AG04450 (cell line): ENCODE measurements at regions of chr10 and their contacts with region 1.

Region 1: GRCh38 chr10:26890956-26891355 is 30.2 kb upstream of the ABI1 start:
- DNase-seq: peak; percentile 29
- H3K4me3 ChIP-seq: no peak overlapping the region
- H3K27ac ChIP-seq: no peak overlapping the region
- H3K27me3 ChIP-seq: peaks cover 2% of the 10 kb centered on the region
- CTCF ChIP-seq: peak; percentile 67

Region 2: GRCh38 chr10:26909746-26910145 is 18.8 kb after region 1 on chr10:
- CTCF ChIA-PET with region 1: no interaction called
- POLR2A ChIA-PET with region 1: no interaction called
- DNase-seq: no peak
- H3K4me3 ChIP-seq: no peak overlapping the region
- H3K27ac ChIP-seq: no peak overlapping the region
- H3K27me3 ChIP-seq: no peaks in the 10 kb centered on the region
- CTCF ChIP-seq: no peak

Region 3: DNA sequence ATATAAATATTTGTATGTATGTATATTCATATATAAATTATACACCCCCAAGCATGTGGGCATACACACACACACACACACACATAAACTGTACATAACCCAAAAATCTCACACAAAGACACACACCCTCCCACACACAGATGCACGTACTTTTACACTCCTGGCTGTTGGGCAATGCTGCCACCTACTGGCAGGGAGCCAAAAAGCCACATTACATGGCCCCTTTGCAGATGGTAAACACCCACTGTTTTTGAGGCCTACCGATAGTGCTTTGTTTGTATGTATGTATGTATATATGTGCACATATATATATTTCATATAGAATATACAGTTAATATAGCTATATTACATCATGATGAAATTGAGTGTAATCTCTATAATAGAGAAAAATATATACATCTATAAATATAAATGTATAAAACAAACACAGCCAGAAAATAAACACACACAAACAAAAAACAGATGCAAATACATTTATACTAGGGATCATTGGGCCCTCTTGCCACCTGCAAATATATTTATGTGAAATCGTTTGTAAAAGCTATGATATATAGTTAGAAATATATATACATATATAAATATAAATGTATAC is 469.7 kb after region 1 on chr10:
- CTCF ChIA-PET with region 1: interaction called, 10 read pairs
- POLR2A ChIA-PET with region 1: no interaction called
- DNase-seq: peak; percentile 29
- H3K4me3 ChIP-seq: no peak overlapping the region
- H3K27ac ChIP-seq: no peak overlapping the region
- H3K27me3 ChIP-seq: no peaks in the 10 kb centered on the region
- CTCF ChIP-seq: peak; percentile 82